Activated T-helper 1 cell treated with anti-CD3 and anti-CD28 coated beads, Interleukin-12 subunit alpha, Interleukin-12 subunit beta, Interleukin-2, Interleukin-4 antibody, amounts not matched to agents 30 ng/mL and 10 ng/mL and 1 ng/mL, durations not matched to agents 14 hours and 24 hours and 36 hours (primary cell): ENCODE measurements at regions of chr6 and their contacts with region 1.

Region 1: GRCh38 chr6:43629505-43630300 is 639 bp upstream of the GTPBP2 start:
- DNase-seq: peak; percentile 94
- H3K4me3 Mint-ChIP-seq: peak overlapping the region; percentile 99
- H3K27ac Mint-ChIP-seq: peak overlapping the region; percentile 95
- H3K4me1 Mint-ChIP-seq: peaks cover 44% of the 10 kb centered on the region
- H3K27me3 Mint-ChIP-seq: no peaks in the 10 kb centered on the region

Region 2: GRCh38 chr6:41735427-41736356 is 1894.0 kb before region 1 on chr6 and contains the start of gene TFEB:
- intact Hi-C with region 1: loop called (anchors 10 kb)
- DNase-seq: peak; percentile 92
- H3K4me3 Mint-ChIP-seq: peak within 1 kb of the TSS; percentile 80
- H3K27ac Mint-ChIP-seq: peak within 1 kb of the TSS; percentile 31
- H3K4me1 Mint-ChIP-seq: peaks cover 23% of the 10 kb centered on the region
- H3K27me3 Mint-ChIP-seq: no peaks in the 10 kb centered on the region
- total RNA-seq, gene TFEB: 15.6 and 17.2 TPM in 2 replicates

Region 3: GRCh38 chr6:43013843-43014433 is 615.8 kb before region 1 on chr6 and contains the starts of genes KLHDC3 and MEA1:
- intact Hi-C with region 1: loop called (anchors 1 kb)
- DNase-seq: peak; percentile 99
- H3K4me3 Mint-ChIP-seq: peak within 1 kb of the TSS; percentile 93
- H3K27ac Mint-ChIP-seq: peak within 1 kb of the TSS; percentile 78
- H3K4me1 Mint-ChIP-seq: peaks cover 41% of the 10 kb centered on the region
- H3K27me3 Mint-ChIP-seq: peaks cover 2% of the 10 kb centered on the region
- total RNA-seq, gene KLHDC3: 76.6 and 77.0 TPM in 2 replicates
- total RNA-seq, gene MEA1: 89.3 and 92.7 TPM in 2 replicates

Region 4: DNA sequence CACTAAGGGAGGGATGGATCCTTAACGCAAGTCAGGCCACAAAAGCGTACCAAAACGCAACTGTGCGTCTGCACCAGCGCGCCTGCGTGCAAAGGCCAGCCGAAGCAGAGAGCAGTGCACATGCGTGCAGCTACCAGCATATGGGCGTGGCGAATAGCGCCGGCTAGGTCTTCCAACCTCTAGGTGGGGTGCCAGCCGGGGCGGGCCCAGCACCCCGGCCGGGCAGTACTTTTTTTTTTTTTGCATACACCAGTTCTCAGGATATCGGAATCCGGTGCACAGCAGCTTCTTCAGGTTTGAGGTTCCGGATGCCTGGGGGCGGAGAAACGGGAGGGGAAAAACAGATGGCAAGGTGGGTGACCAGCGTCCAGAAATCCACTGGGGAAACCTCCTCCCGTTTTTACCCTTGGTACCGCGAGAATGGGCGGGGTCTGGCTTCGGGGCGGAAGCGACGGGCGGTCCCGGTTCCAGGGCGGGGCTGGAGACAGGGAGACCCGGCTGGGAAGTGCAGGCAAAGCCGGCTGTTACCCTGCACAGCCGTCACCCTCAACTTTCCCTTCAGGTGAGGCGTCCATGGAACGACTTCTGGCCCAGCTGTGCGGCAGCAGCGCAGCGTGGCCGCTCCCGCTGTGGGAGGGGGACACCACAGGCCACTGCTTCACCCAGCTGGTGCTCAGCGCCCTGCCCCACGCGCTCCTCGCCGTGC is 202.1 kb before region 1 on chr6 and contains the start of gene ABCC10:
- intact Hi-C with region 1: loop called (anchors 5 kb)
- DNase-seq: peak; percentile 93
- H3K4me3 Mint-ChIP-seq: peak within 1 kb of the TSS; percentile 96
- H3K27ac Mint-ChIP-seq: peak within 1 kb of the TSS; percentile 96
- H3K4me1 Mint-ChIP-seq: peaks cover 17% of the 10 kb centered on the region
- H3K27me3 Mint-ChIP-seq: no peaks in the 10 kb centered on the region
- total RNA-seq, gene ABCC10: 40.5 and 43.6 TPM in 2 replicates

Region 5: DNA sequence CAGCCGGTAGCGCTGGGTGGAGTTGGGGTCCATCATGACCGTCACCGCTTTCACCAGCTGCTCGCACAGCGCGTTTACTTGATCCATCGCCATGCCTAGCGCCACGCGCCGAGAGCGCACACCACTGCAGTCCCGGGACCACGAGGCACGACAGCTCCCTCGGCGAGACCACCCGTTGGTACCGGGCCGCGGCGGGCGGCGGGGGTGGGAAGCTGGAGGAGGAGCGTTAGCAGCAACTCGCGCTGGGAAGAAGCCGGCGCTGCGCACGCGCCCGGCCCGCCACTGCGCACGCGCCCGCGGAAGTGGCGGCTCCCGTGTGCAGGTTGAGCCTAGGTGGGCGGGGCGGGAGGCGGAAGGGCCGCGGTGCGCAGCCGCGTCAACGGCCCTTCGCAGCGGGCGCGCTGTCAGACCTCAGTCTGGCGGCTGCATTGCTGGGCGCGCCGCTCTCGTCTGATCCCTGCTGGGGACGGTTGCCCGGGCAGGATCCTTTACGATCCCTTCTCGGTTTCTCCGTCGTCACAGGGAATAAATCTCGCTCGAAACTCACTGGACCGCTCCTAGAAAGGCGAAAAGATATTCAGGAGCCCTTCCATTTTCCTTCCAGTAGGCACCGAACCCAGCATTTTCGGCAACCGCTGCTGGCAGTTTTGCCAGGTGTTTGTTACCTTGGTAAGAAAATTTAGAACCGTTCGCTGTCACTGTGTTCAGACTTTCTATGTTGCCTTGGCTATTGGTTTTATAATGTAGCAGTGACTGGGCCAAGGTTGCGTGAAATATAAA is 53.7 kb before region 1 on chr6 and contains the starts of genes POLH and XPO5:
- intact Hi-C with region 1: loop called (anchors 1 kb)
- DNase-seq: peak; percentile 90
- H3K4me3 Mint-ChIP-seq: peak within 1 kb of the TSS; percentile 91
- H3K27ac Mint-ChIP-seq: peak within 1 kb of the TSS; percentile 86
- H3K4me1 Mint-ChIP-seq: peaks cover 43% of the 10 kb centered on the region
- H3K27me3 Mint-ChIP-seq: no peaks in the 10 kb centered on the region
- total RNA-seq, gene POLH: 35.7 and 39.1 TPM in 2 replicates
- total RNA-seq, gene XPO5: 135 and 149 TPM in 2 replicates

Region 6: DNA sequence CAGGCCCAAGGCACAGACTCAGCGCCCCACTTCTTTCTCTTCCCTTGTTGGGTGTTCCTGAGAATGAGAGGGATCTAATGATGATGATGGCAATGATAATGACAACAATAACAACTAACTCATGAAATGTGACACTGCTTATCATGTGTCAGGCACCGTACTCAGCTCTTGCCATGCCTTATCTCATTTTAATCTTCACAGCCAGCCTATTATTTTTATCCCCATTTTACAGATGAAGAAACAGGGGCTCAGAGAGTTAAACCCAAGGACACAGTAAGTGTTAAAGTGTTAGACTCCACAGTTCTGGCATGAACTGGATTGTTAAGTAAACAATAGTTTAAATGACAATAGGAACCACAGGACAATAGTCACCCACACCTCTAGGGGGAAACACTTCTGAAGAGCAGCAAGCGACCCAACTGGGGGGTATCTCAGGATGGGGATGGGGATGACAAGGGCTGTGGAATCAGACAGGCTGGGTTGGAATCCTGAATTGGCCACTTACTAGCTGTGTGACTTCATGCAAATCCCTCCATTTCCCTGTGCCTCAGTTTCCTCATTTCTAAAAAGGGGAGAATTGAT is 27.6 kb after region 1 on chr6:
- intact Hi-C with region 1: no loop called
- DNase-seq: no peak
- H3K4me3 Mint-ChIP-seq: no peak overlapping the region
- H3K27ac Mint-ChIP-seq: no peak overlapping the region
- H3K4me1 Mint-ChIP-seq: peaks cover 6% of the 10 kb centered on the region
- H3K27me3 Mint-ChIP-seq: peaks cover 8% of the 10 kb centered on the region

Region 7: GRCh38 chr6:43687437-43688347 is 58.0 kb after region 1 on chr6 and contains the start of gene MRPS18A:
- intact Hi-C with region 1: loop called (anchors 1 kb)
- DNase-seq: peak; percentile 81
- H3K4me3 Mint-ChIP-seq: peak within 1 kb of the TSS; percentile 92
- H3K27ac Mint-ChIP-seq: peak within 1 kb of the TSS; percentile 85
- H3K4me1 Mint-ChIP-seq: peaks cover 46% of the 10 kb centered on the region
- H3K27me3 Mint-ChIP-seq: no peaks in the 10 kb centered on the region
- total RNA-seq, gene MRPS18A: 55.0 and 55.9 TPM in 2 replicates

Region 8: DNA sequence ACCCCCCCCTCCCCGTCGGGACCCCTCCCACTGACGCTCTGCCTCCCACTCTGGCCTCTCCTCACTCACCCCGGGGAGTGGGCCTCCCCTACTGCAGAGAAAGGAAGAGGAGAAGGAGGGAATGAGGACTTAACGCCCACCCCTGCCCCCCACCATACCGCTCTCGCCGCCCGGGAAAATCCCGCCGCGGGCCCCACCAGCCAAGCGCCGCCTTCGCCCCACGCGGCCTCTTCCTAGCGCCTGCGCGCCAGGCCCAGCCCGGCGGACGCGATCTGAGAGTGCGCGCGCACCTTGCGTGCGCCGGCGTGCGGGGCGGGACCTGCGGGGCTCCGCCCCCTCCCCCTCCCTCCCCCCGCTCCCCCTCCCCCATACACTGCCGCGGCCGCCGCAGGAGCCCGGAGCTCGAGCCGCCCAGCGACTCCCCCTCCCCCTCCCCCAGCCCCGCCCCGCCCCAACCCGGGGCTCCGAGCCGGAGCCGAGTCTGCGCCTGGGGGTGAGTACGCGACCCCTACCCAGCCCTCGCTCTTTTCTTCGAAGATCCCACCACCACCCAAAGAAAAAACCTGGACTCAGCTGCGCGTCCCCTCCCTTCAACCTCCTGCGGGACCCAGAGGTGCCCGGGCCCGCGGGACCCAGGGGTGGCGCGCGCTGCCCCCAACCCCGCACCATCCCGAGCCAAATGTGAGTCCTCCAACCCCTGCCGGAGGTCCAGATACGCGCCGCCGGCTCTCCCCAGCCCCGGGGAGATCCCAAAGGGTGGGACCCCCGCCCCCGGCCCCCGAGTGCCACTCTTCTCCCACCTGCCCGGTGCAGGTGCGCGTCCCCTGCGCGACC is 497.7 kb after region 1 on chr6 and contains the starts of genes MRPL14 and TMEM63B:
- intact Hi-C with region 1: loop called (anchors 1 kb)
- DNase-seq: peak; percentile 89
- H3K4me3 Mint-ChIP-seq: peak within 1 kb of the TSS; percentile 90
- H3K27ac Mint-ChIP-seq: peak within 1 kb of the TSS; percentile 94
- H3K4me1 Mint-ChIP-seq: peaks cover 50% of the 10 kb centered on the region
- H3K27me3 Mint-ChIP-seq: no peaks in the 10 kb centered on the region
- total RNA-seq, gene MRPL14: 62.6 and 68.6 TPM in 2 replicates
- total RNA-seq, gene TMEM63B: 17.0 and 20.7 TPM in 2 replicates